ENCODE measurements at regions of chr3 and their contacts with region 1.

Region 1: GRCh38 chr3:101069901-101070798 is 76.9 kb upstream of the ABI3BP start:
- DNase-seq: peak; percentile 7
- ATAC-seq: peak; percentile 99
- H3K4me3 ChIP-seq: no peak overlapping the region
- H3K27ac ChIP-seq: no peak overlapping the region
- H3K4me1 ChIP-seq: no peaks in the 10 kb centered on the region
- H3K27me3 ChIP-seq: no peaks in the 10 kb centered on the region
- CTCF ChIP-seq: peak; percentile 60 to 92 (median 87)
- EP300 ChIP-seq: no peak
- POLR2A ChIP-seq: no peak
- RAD21 ChIP-seq: peak; percentile 76

Region 2: GRCh38 chr3:101195951-101196713 is 126.0 kb after region 1 on chr3:
- CTCF ChIA-PET with region 1: interaction called, 3 read pairs
- POLR2A ChIA-PET with region 1: no interaction called
- RAD21 ChIA-PET with region 1: interaction called, 3 read pairs
- SMC1A ChIA-PET with region 1: no interaction called
- in situ Hi-C with region 1: no loop called
- intact Hi-C with region 1: loop called (anchors 1 kb)
- DNase-seq: no peak
- ATAC-seq: peak; percentile 49; the same call in 2 of the 3 replicates
- H3K4me3 ChIP-seq: no peak overlapping the region
- H3K27ac ChIP-seq: no peak overlapping the region
- H3K4me1 ChIP-seq: no peaks in the 10 kb centered on the region
- H3K27me3 ChIP-seq: no peaks in the 10 kb centered on the region
- CTCF ChIP-seq: peak in 2 of 3 experiments; percentile 13 to 35; a peak in 3 of 6 replicates
- EP300 ChIP-seq: no peak
- POLR2A ChIP-seq: no peak
- RAD21 ChIP-seq: peak; percentile 66

Region 3: DNA sequence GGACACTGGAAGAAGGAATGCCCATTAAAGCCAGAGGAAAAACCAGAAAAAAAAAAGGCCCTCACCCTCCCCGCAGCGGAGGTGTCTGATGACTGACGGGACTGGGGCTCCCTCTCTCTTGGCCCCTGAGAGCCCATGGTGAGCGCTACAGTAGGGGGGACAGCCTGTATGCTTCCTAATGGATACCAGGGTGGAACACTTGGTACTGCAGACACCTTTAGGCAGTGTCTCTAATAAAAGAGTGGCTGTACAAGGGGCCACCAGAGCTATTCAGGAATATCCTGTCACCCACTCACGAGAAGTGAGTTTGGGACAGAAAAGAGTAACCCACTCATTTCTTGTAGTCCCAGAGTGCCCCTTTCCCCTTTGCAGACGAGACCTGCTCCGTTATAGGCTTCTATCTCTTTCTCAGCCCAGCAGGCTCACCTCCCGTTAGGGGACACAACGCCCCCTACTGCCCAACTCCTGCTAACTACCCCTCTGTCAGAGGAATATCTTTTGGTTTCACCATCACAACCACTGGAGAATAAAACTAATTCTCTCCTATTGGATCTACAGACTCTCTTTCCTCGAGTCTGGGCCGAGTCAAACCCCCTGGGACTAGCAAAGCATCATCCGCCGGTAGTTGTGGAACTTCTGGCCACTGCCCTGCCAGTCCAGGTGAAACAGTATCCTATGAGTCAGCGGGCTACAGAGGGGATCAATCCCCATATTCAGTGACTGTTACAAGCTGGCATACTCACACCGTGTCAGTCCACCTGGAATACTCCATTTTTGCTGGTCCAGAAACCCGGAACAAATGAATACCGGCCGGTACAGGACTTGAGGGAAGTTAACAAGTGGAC is 566.0 kb after region 1 on chr3:
- CTCF ChIA-PET with region 1: interaction called, 6 read pairs
- POLR2A ChIA-PET with region 1: no interaction called
- RAD21 ChIA-PET with region 1: interaction called, 4 read pairs
- SMC1A ChIA-PET with region 1: no interaction called
- in situ Hi-C with region 1: loop called (anchors 5 kb)
- intact Hi-C with region 1: loop called (anchors 1 kb)
- DNase-seq: peak; percentile 11
- ATAC-seq: peak; percentile 98
- H3K4me3 ChIP-seq: no peak overlapping the region
- H3K27ac ChIP-seq: no peak overlapping the region
- H3K4me1 ChIP-seq: no peaks in the 10 kb centered on the region; the same call in 1 of the 2 replicates
- H3K27me3 ChIP-seq: no peaks in the 10 kb centered on the region; a peak in 1 of 4 replicates
- CTCF ChIP-seq: peak; percentile 63 to 67 (median 65)
- EP300 ChIP-seq: no peak
- POLR2A ChIP-seq: no peak
- RAD21 ChIP-seq: peak; percentile 68

Measured in GM12878 (cell line).